ENCODE measurements at regions of chr2 and their contacts with region 1.

Region 1: GRCh38 chr2:230326453-230327417 is at the start of gene SP140L:
- DNase-seq: peak; percentile 90
- ATAC-seq: peak; percentile 98
- H3K4me3 Mint-ChIP-seq: peak within 1 kb of the TSS; percentile 97
- H3K27ac Mint-ChIP-seq: peak within 1 kb of the TSS; percentile 93
- H3K4me1 Mint-ChIP-seq: peaks cover 60% of the 10 kb centered on the region
- H3K27me3 Mint-ChIP-seq: no peaks in the 10 kb centered on the region
- CTCF ChIP-seq: no peak
- total RNA-seq, gene SP140L: 43.7 to 43.8 TPM

Region 2: DNA sequence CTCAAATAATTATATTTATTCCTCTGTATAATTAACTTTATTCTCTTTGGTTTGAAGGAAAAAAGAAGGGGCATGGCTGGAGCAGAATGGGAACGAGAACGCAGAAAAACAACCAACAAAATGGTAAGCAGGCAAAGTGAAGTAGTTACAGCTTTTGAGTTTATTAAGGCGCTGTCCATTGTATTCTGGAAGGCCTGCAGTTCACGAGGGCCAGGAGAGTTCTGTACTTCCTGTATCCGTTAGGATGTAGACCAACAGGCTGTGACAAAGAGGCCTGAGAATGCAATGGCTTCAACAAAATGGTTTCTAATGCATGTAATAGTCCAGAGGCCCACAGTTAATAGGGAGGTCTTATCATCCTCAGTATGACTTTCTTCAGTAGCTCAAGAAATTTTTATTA is 56.7 kb after region 1 on chr2:
- CTCF ChIA-PET with region 1: no interaction called
- POLR2A ChIA-PET with region 1: no interaction called
- intact Hi-C with region 1: no loop called
- DNase-seq: no peak
- ATAC-seq: no peak
- H3K4me3 Mint-ChIP-seq: no peak overlapping the region
- H3K27ac Mint-ChIP-seq: no peak overlapping the region
- H3K4me1 Mint-ChIP-seq: peaks cover under 1% of the 10 kb centered on the region
- H3K27me3 Mint-ChIP-seq: no peaks in the 10 kb centered on the region
- CTCF ChIP-seq: no peak

Region 3: GRCh38 chr2:230411570-230412370 is 85.0 kb after region 1 on chr2:
- CTCF ChIA-PET with region 1: interaction called, 3 read pairs
- POLR2A ChIA-PET with region 1: interaction called, 9 read pairs
- intact Hi-C with region 1: loop called (anchors 10 kb)
- DNase-seq: peak; percentile 59
- ATAC-seq: peak; percentile 60
- H3K4me3 Mint-ChIP-seq: peak overlapping the region; percentile 94
- H3K27ac Mint-ChIP-seq: peak overlapping the region; percentile 96
- H3K4me1 Mint-ChIP-seq: peaks cover 54% of the 10 kb centered on the region
- H3K27me3 Mint-ChIP-seq: no peaks in the 10 kb centered on the region
- CTCF ChIP-seq: no peak

Region 4: GRCh38 chr2:230614913-230615332 is 288.2 kb after region 1 on chr2:
- CTCF ChIA-PET with region 1: no interaction called
- POLR2A ChIA-PET with region 1: no interaction called
- intact Hi-C with region 1: loop called (anchors 10 kb)
- DNase-seq: peak; percentile 82
- ATAC-seq: peak; percentile 77
- H3K4me3 Mint-ChIP-seq: no peak overlapping the region
- H3K27ac Mint-ChIP-seq: peak overlapping the region; percentile 23
- H3K4me1 Mint-ChIP-seq: peaks cover 24% of the 10 kb centered on the region
- H3K27me3 Mint-ChIP-seq: no peaks in the 10 kb centered on the region
- CTCF ChIP-seq: no peak

Region 5: DNA sequence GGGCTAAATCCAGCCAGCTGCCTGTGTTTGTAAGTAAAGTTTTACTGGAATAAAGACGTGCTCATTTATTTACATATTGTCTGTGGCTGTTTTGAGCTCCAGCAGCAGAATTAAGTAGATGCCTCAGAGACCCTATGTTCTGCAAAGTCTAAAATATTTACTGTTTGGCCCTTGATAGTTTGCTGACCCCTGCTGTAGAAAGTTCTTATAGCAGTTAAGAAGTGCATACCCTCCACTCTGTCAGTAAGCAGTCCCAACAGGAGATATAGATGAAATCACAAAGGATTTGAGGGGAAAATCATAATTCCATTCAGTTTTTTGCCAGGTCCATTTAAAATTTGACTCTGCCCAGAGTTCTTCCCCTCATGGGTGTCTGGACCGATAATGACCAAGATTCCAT is 487.9 kb after region 1 on chr2:
- CTCF ChIA-PET with region 1: no interaction called
- POLR2A ChIA-PET with region 1: no interaction called
- intact Hi-C with region 1: no loop called
- DNase-seq: no peak
- ATAC-seq: peak; percentile 60
- H3K4me3 Mint-ChIP-seq: no peak overlapping the region
- H3K27ac Mint-ChIP-seq: no peak overlapping the region
- H3K4me1 Mint-ChIP-seq: peaks cover 10% of the 10 kb centered on the region
- H3K27me3 Mint-ChIP-seq: no peaks in the 10 kb centered on the region
- CTCF ChIP-seq: no peak